ENCODE measurements at regions of chr13 and their contacts with region 1.

Region 1: GRCh38 chr13:72808917-72809500 is 27.1 kb downstream of the PIBF1 start:
- DNase-seq: no peak
- H3K4me3 ChIP-seq: no peak overlapping the region
- H3K27ac ChIP-seq: no peak overlapping the region
- H3K4me1 ChIP-seq: no peaks in the 10 kb centered on the region
- H3K27me3 ChIP-seq: no peaks in the 10 kb centered on the region
- CTCF ChIP-seq: peak; percentile 28 to 59 (median 50)
- EP300 ChIP-seq: no peak
- POLR2A ChIP-seq: no peak

Region 2: DNA sequence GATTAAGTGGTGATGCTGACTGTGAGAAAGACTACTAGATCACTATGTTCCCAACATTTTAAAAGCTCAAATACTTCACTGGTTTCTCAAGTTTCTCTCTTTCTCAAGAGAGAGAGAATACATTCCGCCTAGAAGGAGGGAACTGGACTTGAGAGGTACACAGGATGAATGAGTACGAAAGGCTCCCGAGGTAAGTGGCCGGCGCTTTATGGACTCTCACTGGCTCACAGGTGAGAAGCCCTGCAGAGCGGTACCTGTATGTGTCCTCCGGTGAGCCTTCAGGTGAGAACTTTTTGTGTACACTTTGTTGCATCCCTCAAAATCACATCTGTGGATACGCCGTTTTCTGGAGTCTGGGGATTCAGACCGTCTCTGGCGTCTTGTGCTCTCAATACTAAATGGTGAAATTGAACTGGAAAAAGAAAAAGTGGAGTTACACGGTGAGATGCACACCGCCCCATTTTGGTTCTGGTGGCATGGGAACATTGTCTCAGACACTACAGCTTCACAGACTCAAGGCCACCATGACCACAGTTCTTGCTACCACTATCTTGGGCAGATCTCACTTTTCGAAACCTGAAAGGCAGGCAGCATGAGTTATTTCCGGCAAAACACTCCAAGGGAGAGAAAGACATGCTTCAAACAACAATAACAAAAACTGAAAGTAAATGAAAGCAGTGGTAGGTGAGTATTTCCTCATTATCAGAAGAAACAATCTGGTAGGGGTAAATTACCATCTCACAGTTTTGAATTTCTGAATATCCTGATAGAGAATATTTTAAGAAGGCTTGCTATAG is 906.3 kb after region 1 on chr13:
- intact Hi-C with region 1: loop called (anchors 10 kb)
- DNase-seq: peak; percentile 50
- H3K4me3 ChIP-seq: no peak overlapping the region
- H3K27ac ChIP-seq: no peak overlapping the region
- H3K4me1 ChIP-seq: no peaks in the 10 kb centered on the region
- H3K27me3 ChIP-seq: no peaks in the 10 kb centered on the region
- CTCF ChIP-seq: no peak
- EP300 ChIP-seq: no peak
- POLR2A ChIP-seq: no peak